GM13976 (cell line): ENCODE measurements at regions of chr3 and their contacts with region 1.

Region 1: DNA sequence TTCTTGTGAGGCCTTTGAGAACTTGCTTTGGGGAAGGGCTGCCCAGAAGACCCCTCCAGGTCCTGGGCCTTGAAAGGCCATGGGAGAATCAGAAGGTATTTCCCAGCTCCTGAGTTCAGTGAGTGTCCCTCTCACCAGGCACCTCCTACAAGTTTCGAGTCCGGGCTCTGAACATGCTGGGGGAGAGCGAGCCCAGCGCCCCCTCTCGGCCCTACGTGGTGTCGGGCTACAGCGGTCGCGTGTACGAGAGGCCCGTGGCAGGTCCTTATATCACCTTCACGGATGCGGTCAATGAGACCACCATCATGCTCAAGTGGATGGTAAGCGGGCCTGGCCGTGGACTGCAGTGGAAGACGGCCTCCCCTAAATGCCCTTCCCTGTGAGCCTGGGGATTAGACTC is 68.3 kb downstream of the BOC start:
- DNase-seq: no peak
- CTCF ChIP-seq: no peak

Region 2: GRCh38 chr3:113051302-113051711 is 228.4 kb before region 1 on chr3:
- in situ Hi-C with region 1: loop called (anchors 5 kb)
- DNase-seq: peak; percentile 77
- CTCF ChIP-seq: peak; percentile 60